Activated T-helper 1 cell treated with anti-CD3 and anti-CD28 coated beads, Interleukin-12 subunit alpha, Interleukin-12 subunit beta, Interleukin-2, Interleukin-4 antibody, amounts not matched to agents 30 ng/mL and 10 ng/mL and 1 ng/mL, durations not matched to agents 14 hours and 24 hours and 36 hours (primary cell): ENCODE measurements at regions of chr12 and their contacts with region 1.

Region 1: DNA sequence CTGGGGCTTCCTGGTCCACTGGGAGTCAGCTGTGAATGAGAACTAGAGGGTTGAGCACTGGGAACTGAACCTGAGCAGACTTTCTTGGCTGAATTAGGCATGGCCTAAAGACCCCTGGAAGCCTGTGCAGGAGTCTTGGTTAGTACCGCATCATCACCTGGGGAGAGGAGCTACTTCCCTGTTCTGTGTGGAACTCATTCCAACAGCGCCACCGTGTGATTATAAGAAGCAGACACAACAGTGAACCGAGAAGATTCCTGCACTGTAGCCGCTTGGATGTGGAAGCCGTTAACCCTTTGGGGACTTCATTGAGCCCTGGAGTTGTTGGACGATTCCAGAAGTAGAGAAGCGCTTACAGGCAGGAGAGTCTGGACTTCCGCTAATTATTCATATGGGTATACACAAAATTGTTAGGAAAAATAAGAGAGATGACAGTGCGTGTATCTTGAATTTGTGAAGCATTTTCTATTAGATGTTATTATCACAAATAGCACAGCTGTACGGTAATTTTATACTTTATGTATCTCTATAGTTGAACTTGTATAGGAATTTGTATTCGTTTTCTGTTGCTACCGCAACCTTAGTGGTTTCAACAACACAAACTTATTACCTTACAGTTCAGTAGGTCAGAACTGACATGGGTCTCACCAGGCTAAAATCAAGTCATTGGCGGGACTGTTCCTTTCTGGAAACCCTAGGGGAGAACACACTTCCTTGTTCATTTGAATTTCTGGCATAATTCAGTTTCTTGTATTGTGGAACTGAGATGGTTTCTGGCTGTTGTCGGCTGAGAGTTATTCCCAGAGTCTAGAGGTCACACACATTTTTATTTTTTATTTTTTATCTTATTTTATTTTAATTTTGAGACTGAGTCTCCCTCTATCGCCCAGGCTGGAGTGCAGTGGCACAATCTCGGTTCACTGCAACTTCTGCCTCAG is 100.7 kb downstream of the C2CD5 start:
- DNase-seq: peak; percentile 37
- H3K4me3 Mint-ChIP-seq: no peak overlapping the region
- H3K27ac Mint-ChIP-seq: no peak overlapping the region
- H3K4me1 Mint-ChIP-seq: peaks cover 9% of the 10 kb centered on the region
- H3K27me3 Mint-ChIP-seq: peaks cover 9% of the 10 kb centered on the region

Region 2: GRCh38 chr12:21697904-21698630 is 745.6 kb before region 1 on chr12:
- intact Hi-C with region 1: loop called (anchors 1 kb)
- DNase-seq: no peak
- H3K4me3 Mint-ChIP-seq: no peak overlapping the region
- H3K27ac Mint-ChIP-seq: no peak overlapping the region
- H3K4me1 Mint-ChIP-seq: no peaks in the 10 kb centered on the region
- H3K27me3 Mint-ChIP-seq: peaks cover 10% of the 10 kb centered on the region

Region 3: DNA sequence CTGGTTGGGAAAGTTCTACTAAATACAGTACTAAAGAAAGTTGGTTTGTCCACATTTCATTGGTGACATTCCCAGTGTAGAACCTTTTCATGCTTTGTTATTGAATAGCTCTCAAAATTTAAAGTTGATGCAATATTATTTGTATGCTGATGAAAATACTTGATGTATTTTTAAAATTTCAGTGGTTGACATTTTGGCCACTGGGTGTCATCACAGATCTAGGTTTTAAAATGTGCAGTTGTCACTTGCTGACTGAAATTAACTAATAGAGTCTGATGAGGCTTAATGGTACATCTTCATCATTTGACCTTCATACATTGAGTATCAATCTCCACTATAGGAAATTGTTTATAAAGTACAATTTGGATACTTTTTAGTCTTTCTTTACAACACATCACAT is 360.5 kb before region 1 on chr12:
- intact Hi-C with region 1: loop called (anchors 1 kb)
- DNase-seq: no peak
- H3K4me3 Mint-ChIP-seq: no peak overlapping the region
- H3K27ac Mint-ChIP-seq: no peak overlapping the region
- H3K4me1 Mint-ChIP-seq: no peaks in the 10 kb centered on the region
- H3K27me3 Mint-ChIP-seq: peaks cover 12% of the 10 kb centered on the region

Region 4: GRCh38 chr12:22100958-22101748 is 342.5 kb before region 1 on chr12:
- intact Hi-C with region 1: loop called (anchors 1 kb)
- DNase-seq: peak; percentile 25
- H3K4me3 Mint-ChIP-seq: no peak overlapping the region
- H3K27ac Mint-ChIP-seq: no peak overlapping the region
- H3K4me1 Mint-ChIP-seq: peaks cover 7% of the 10 kb centered on the region
- H3K27me3 Mint-ChIP-seq: peaks cover 12% of the 10 kb centered on the region

Region 5: DNA sequence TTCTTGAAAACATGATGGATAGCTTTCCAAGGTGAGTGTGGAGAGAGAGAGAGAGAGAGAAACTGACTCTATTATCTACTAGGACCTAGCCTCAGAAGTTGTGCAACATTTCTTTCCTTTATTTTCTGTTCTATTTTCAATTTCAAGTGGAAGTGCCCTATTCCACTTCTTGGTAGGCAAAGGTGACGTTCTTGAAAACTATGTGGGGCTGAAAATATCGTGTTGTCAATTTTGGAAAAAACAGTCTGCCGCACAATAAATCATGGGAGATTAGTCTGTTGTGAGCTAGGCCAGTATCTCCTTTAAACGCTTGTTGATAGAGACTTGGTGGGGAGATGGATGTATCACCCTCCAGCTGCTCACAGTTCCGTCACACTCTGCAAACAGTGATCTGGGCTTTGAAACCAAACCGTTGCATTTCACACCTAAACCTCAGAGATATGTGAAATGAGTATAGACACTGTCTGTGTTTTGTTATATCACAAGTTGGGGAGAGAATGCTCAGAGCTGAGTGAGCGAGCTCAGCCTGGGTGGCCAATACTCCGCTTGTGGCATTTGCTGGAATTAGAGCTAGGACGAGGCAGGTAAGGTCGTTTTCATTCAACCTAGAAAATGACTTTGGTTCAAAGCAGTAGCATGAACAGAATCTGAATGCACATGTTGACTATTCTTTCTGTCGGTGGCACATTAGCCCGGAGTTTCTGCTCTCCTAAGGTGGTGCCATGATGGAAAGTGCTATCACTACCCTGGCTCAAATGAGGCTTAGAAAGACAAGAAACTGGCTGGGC is 34.1 kb before region 1 on chr12:
- intact Hi-C with region 1: loop called (anchors 5 kb)
- DNase-seq: peak; percentile 52
- H3K4me3 Mint-ChIP-seq: peak overlapping the region; percentile 6
- H3K27ac Mint-ChIP-seq: peak overlapping the region; percentile 54
- H3K4me1 Mint-ChIP-seq: peaks cover 31% of the 10 kb centered on the region
- H3K27me3 Mint-ChIP-seq: no peaks in the 10 kb centered on the region

Region 6: GRCh38 chr12:22459838-22460490 is 16.3 kb after region 1 on chr12:
- intact Hi-C with region 1: loop called (anchors 1 kb)
- DNase-seq: no peak
- H3K4me3 Mint-ChIP-seq: no peak overlapping the region
- H3K27ac Mint-ChIP-seq: no peak overlapping the region
- H3K4me1 Mint-ChIP-seq: no peaks in the 10 kb centered on the region
- H3K27me3 Mint-ChIP-seq: no peaks in the 10 kb centered on the region